ENCODE measurements at regions of chr11 and their contacts with region 1.

Region 1: GRCh38 chr11:1694064-1694845 is 2.7 kb upstream of the KRTAP5-6 start:
- DNase-seq: peak; percentile 95
- H3K4me3 ChIP-seq: peak overlapping the region in 1 of 2 experiments; percentile 51; a peak in 1 of 4 replicates
- H3K27ac ChIP-seq: peak overlapping the region in 1 of 2 experiments; percentile 73; a peak in 1 of 4 replicates
- H3K4me1 ChIP-seq: peaks cover 6 to 13% of the 10 kb centered on the region in 2 experiments; a peak in 2 of 4 replicates
- H3K27me3 ChIP-seq: no peaks in the 10 kb centered on the region
- CTCF ChIP-seq: peak; percentile 85
- EP300 ChIP-seq: no peak
- RAD21 ChIP-seq: peak; percentile 91

Region 2: GRCh38 chr11:1572197-1573076 is 121.8 kb before region 1 on chr11 and contains the start of gene DUSP8:
- CTCF ChIA-PET with region 1: no interaction called
- POLR2A ChIA-PET with region 1: no interaction called
- DNase-seq: peak; percentile 98
- H3K4me3 ChIP-seq: peak within 1 kb of the TSS; percentile 57 to 64
- H3K27ac ChIP-seq: peak within 1 kb of the TSS in 1 of 2 experiments; percentile 81; a peak in 2 of 4 replicates
- H3K4me1 ChIP-seq: peaks cover 0 to 33% of the 10 kb centered on the region in 2 experiments; a peak in 1 of 4 replicates
- H3K27me3 ChIP-seq: peaks cover 4% of the 10 kb centered on the region; the same call in 1 of the 2 replicates
- CTCF ChIP-seq: no peak
- EP300 ChIP-seq: no peak
- RAD21 ChIP-seq: no peak
- polyA plus RNA-seq, gene DUSP8: 2.0 and 2.2 TPM in 2 replicates

Region 3: GRCh38 chr11:1652771-1653540 is 41.3 kb before region 1 on chr11:
- CTCF ChIA-PET with region 1: interaction called, 218 read pairs
- POLR2A ChIA-PET with region 1: interaction called, 5 read pairs
- DNase-seq: peak; percentile 96
- H3K4me3 ChIP-seq: peak overlapping the region in 1 of 2 experiments; percentile 25; a peak in 2 of 4 replicates
- H3K27ac ChIP-seq: no peak overlapping the region
- H3K4me1 ChIP-seq: peaks cover 0 to 27% of the 10 kb centered on the region in 2 experiments; a peak in 1 of 4 replicates
- H3K27me3 ChIP-seq: no peaks in the 10 kb centered on the region
- CTCF ChIP-seq: peak; percentile 95
- EP300 ChIP-seq: no peak
- RAD21 ChIP-seq: peak; percentile 93

Region 4: DNA sequence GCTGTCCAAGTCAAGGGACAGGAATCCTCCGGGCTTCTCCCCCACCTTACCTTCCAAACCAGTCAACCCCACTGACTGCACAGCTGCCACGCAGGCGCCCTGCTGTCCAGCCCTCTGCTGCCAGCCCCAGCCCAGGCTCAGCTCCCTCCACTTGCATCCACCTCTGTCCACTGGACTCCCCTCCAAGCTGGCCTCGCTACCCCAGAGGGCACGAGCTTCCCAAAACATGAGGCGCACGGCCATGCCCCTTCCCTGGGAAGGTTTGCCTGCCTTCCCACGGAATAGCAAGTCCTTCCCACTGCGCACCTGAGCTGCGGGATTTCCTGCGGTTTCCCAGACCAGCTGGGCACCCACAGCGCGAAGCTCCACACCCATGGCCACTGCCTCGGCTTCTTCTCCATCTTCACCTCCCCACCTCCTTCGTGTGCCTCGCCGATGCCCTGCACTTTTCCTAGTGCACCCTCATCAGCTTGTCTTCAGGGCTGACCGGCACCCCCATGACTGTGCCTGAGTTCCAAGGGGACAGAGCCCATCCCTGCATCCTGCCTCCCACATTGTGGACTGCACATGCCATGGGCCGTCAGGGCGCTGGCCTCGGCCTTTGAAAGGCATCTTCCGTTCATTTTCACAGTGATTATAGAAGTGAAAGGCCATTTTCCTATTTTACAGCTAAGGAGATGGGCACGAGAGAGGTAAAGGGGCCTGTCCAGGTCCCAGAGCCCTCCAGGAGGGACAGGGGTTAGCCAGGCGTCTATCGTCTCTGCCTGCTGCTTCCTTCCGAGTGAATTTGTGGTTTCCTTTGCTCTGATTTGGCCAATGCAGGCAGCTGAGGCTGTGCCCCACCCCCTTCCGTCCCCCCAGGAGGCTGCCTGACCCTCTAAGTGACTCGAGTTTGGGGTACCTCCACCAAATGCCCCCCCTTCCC is 39.7 kb after region 1 on chr11:
- CTCF ChIA-PET with region 1: interaction called, 19 read pairs
- POLR2A ChIA-PET with region 1: no interaction called
- DNase-seq: no peak
- H3K4me3 ChIP-seq: no peak overlapping the region
- H3K27ac ChIP-seq: no peak overlapping the region; a peak in 1 of 4 replicates
- H3K4me1 ChIP-seq: peaks cover 0 to 36% of the 10 kb centered on the region in 2 experiments; a peak in 1 of 4 replicates
- H3K27me3 ChIP-seq: peaks cover 1% of the 10 kb centered on the region; the same call in 1 of the 2 replicates
- CTCF ChIP-seq: no peak
- EP300 ChIP-seq: no peak
- RAD21 ChIP-seq: no peak

Region 5: GRCh38 chr11:1807264-1807995 is 113.2 kb after region 1 on chr11:
- CTCF ChIA-PET with region 1: interaction called, 26 read pairs
- POLR2A ChIA-PET with region 1: no interaction called
- DNase-seq: no peak
- H3K4me3 ChIP-seq: no peak overlapping the region
- H3K27ac ChIP-seq: no peak overlapping the region
- H3K4me1 ChIP-seq: no peaks in the 10 kb centered on the region
- H3K27me3 ChIP-seq: no peaks in the 10 kb centered on the region; the same call in 1 of the 2 replicates
- CTCF ChIP-seq: no peak; the same call in 1 of the 2 replicates
- EP300 ChIP-seq: no peak
- RAD21 ChIP-seq: no peak

Region 6: DNA sequence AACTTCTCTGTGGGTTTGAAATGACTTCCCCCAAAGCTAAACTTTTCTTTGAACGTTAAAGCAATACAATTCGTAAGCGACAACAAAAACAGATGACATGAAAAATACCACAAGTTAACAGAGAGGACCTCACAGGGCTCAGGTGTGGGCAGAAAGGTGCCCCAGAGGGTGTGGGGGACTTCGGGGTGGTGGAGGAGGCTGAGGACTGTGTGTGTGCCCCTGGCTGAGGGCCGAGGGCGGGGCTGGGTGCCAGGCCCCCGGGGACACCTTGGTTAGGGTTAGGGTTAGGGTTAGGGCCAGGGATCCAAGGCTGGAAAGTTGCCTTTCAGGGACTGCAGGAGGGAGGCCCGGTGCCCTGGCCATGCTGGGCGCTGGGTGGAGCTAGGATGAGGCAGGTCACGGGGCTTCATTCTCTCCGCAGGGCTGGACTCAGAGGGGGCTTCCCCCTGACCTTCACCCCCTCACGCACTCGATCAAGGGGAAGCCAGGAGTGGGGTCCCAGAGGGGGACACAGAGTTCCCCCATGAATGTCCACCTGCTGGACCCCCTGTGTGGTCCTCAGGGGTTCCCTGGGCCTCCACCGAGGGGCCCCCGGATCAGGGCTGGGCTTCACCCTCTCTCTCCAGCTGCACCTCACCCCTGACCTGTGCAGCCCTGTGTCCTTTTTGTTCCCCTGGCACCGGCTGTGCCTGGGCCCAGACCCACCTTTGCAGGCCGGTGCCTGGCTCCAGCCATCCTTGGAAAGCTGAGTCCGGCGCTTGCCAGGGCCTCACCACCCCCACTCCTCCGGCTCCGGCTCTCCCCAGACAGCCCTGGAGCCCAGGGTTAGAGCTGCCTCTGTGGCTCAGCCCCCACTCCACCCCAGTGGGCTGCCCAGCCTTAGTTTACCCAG is 151.6 kb after region 1 on chr11:
- CTCF ChIA-PET with region 1: interaction called, 26 read pairs
- POLR2A ChIA-PET with region 1: no interaction called
- DNase-seq: no peak
- H3K4me3 ChIP-seq: no peak overlapping the region
- H3K27ac ChIP-seq: no peak overlapping the region
- H3K4me1 ChIP-seq: peaks cover 0 to 2% of the 10 kb centered on the region in 2 experiments; a peak in 1 of 4 replicates
- H3K27me3 ChIP-seq: no peaks in the 10 kb centered on the region
- CTCF ChIP-seq: no peak
- EP300 ChIP-seq: no peak
- RAD21 ChIP-seq: no peak

Region 7: DNA sequence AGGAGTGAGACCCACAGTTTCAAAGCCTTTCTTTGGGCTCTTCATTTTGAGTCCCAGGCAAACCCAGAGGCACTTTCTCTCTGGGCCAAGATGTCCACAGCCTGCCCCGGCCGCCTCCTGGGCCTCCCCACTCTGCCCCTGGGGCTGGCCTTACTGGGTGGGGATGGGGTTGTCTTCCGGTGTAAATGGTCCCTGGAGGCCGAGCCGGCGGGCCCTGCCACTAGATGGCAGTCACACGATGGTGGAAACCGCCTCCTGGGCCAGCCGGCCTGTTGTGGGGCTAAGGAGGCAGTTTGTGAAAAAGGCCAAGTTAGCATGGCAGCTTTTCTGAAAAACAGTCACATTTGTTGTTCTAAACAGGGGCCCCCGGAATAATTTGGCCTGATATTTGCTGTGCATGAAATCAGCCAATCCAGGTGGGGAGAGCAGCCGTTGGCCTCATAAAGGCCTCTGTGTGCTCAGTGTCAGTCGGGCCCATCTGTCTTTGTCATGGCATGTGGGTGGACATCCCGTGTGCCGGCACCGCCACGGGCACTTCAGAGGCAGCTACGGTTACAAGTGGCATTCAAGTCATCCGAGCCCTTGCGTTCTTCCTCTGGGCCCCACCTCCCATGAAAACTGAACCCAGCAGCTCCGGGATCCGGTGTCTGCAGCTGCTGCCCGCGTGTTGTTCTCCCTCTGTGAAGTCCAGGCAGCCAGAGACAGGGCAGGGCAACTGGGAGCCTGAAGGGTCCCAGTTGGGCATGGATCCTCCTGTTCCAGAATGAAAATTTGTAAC is 259.4 kb after region 1 on chr11:
- CTCF ChIA-PET with region 1: interaction called, 21 read pairs
- POLR2A ChIA-PET with region 1: interaction called, 3 read pairs
- DNase-seq: no peak
- H3K4me3 ChIP-seq: no peak overlapping the region
- H3K27ac ChIP-seq: peak overlapping the region in 1 of 2 experiments; percentile 47; a peak in 1 of 4 replicates
- H3K4me1 ChIP-seq: no peaks in the 10 kb centered on the region; a peak in 1 of 4 replicates
- H3K27me3 ChIP-seq: no peaks in the 10 kb centered on the region
- CTCF ChIP-seq: no peak
- EP300 ChIP-seq: no peak
- RAD21 ChIP-seq: no peak

Region 8: DNA sequence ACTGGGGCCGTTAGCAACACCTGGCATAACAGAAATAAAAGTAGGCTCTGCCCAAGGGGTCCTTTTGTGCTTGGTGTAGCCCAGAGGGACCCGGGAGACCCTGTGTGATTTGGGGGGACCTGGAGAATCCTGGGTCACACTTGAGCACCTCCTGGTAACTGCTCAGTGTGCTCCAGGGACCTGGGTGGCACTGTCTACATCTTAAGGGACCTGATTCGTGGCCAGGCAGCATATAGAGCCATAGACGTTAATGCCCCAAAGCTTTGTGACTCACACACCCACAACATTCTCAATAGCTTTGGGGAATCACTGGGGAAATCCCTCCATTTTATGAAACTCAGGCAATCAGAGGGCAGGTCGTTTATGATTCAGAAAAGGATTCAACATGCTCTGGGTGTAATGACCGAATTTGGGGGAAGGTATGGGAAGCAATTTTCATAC is 448.5 kb after region 1 on chr11:
- CTCF ChIA-PET with region 1: interaction called, 17 read pairs
- POLR2A ChIA-PET with region 1: no interaction called
- DNase-seq: no peak
- H3K4me3 ChIP-seq: no peak overlapping the region
- H3K27ac ChIP-seq: no peak overlapping the region; a peak in 1 of 4 replicates
- H3K4me1 ChIP-seq: no peaks in the 10 kb centered on the region; a peak in 1 of 4 replicates
- H3K27me3 ChIP-seq: peaks cover 72% of the 10 kb centered on the region
- CTCF ChIP-seq: no peak
- EP300 ChIP-seq: no peak
- RAD21 ChIP-seq: no peak

Measured in SK-N-SH (cell line).